ENCODE measurements at regions of chr1 and their contacts with region 1.

Region 1: DNA sequence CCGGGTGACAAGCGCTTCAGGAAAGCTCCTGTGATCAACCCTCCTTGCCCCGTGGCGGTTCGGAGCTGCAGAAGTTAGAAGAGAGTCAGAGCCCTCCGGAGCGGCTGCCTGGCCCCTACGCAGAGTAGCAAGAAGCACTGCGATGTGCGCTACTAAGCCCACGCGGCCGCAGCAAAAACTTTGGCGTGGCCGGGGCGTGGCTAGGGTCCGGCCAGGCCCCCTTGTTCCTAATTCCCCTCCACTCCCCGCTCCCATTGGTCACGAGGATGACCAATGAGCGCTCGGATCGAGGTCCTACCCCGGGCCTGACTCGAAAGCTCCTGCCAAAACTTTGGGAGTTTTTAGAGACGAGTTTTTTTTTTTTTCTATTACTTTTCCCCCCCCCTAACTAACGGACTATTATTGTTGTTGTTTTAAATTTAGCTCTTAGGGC is at the start of gene HLX:
- DNase-seq: peak; percentile 94 to 97 (median 97)
- ATAC-seq: peak; percentile 95 to 96
- H3K4me3 ChIP-seq: peak within 1 kb of the TSS; percentile 85
- H3K27ac ChIP-seq: peak within 1 kb of the TSS; percentile 88
- H3K4me1 ChIP-seq: peaks cover 2% of the 10 kb centered on the region
- H3K27me3 ChIP-seq: no peaks in the 10 kb centered on the region
- total RNA-seq, gene HLX: 4.1 to 9.4 (median 6.9) TPM

Region 2: DNA sequence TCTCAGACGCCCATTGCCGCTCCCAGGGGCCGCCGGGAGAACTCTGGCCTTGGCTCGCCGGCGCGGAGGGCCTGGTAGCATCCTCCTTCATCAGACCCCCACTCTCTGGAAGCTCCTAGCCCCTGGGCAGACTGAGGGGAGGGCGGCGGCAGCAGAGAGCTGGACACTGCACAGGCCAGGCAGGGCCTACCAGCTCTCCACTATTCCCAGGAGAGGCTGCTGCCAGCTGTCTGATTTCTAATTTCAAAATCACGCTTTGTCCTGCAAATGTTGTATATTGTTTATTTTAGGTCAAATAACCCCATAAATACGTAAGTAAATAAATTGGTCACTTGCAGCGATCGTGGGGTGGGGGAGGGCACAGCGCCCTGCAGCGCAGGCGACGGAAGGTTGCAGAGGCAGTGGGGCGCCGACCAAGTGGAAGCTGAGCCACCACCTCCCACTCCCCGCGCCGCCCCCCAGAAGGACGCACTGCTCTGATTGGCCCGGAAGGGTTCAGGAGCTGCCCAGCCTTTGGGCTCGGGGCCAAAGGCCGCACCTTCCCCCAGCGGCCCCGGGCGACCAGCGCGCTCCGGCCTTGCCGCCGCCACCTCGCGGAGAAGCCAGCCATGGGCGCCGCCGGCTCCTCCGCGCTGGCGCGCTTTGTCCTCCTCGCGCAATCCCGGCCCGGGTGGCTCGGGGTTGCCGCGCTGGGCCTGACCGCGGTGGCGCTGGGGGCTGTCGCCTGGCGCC is 92.6 kb before region 1 on chr1 and contains the start of gene MTARC1:
- intact Hi-C with region 1: no loop called
- DNase-seq: peak; percentile 79 to 92 (median 92)
- ATAC-seq: peak; percentile 89 to 93
- H3K4me3 ChIP-seq: peak within 1 kb of the TSS; percentile 55
- H3K27ac ChIP-seq: peak within 1 kb of the TSS; percentile 54
- H3K4me1 ChIP-seq: peaks cover 2% of the 10 kb centered on the region
- H3K27me3 ChIP-seq: no peaks in the 10 kb centered on the region
- total RNA-seq, gene MTARC1: 3.2 to 10.9 (median 3.5) TPM

Region 3: GRCh38 chr1:221166559-221167318 is 287.6 kb after region 1 on chr1:
- intact Hi-C with region 1: loop called in 1 of 4 experiments (anchors 10 kb)
- DNase-seq: no peak
- ATAC-seq: peak in 1 of 2 donors; percentile 40
- H3K4me3 ChIP-seq: no peak overlapping the region
- H3K27ac ChIP-seq: no peak overlapping the region
- H3K4me1 ChIP-seq: peaks cover 3% of the 10 kb centered on the region
- H3K27me3 ChIP-seq: no peaks in the 10 kb centered on the region

Region 4: GRCh38 chr1:221203224-221204054 is 324.3 kb after region 1 on chr1:
- intact Hi-C with region 1: loop called in 2 of 4 experiments (anchors 5 to 10 kb)
- DNase-seq: peak; percentile 65 to 90 (median 87)
- ATAC-seq: peak; percentile 66 to 70
- H3K4me3 ChIP-seq: no peak overlapping the region
- H3K27ac ChIP-seq: peak overlapping the region; percentile 7
- H3K4me1 ChIP-seq: no peaks in the 10 kb centered on the region
- H3K27me3 ChIP-seq: no peaks in the 10 kb centered on the region

Region 5: GRCh38 chr1:221429262-221429661 is 550.2 kb after region 1 on chr1:
- intact Hi-C with region 1: loop called (anchors 5 to 10 kb)
- DNase-seq: no peak
- ATAC-seq: no peak
- H3K4me3 ChIP-seq: no peak overlapping the region
- H3K27ac ChIP-seq: no peak overlapping the region
- H3K4me1 ChIP-seq: no peaks in the 10 kb centered on the region
- H3K27me3 ChIP-seq: no peaks in the 10 kb centered on the region

Measured in right cardiac atrium (tissue), 5 donors.